A673 (cell line): ENCODE measurements at regions of chr2 and their contacts with region 1.

Region 1: DNA sequence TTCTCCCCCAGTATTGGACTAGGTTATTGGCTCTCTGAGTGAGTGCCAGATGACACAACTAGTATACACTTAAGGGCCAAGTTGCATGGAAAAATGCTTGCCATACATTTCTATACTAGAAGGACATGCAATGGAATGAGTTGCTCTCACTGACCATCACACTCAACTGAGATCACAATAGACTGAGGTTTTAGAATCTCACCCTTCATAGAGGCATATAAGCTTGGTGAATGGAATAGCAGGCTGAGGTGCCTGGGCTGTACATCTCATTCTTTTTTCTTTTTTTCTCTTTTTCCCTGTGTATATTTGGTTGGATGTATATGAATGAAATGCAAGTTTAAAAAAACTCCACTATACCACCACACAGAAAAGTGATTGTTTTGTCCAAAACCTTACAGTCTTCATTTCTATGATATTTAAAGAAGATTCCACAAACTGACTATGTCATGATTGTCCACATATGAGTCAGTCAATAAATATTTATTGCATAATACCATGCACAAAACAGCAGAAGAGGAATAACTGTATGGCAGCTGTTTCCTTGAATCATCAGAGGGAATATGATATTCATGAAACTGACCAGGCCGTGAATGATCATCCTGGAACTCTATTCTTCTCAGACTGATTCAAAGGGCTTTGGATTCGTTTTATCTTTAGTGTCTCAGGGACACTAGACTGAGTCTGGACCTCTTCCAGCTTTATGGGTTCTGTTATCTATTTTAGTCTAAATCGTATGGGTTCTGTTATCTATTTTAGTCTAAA is 122.6 kb upstream of the STK17B start:
- DNase-seq: no peak
- H3K4me3 ChIP-seq: no peak overlapping the region
- H3K27ac ChIP-seq: no peak overlapping the region
- H3K4me1 ChIP-seq: no peaks in the 10 kb centered on the region
- H3K27me3 ChIP-seq: no peaks in the 10 kb centered on the region
- CTCF ChIP-seq: no peak

Region 2: GRCh38 chr2:196453613-196454047 is 159.7 kb after region 1 on chr2:
- CTCF ChIA-PET with region 1: interaction called, 3 read pairs
- POLR2A ChIA-PET with region 1: no interaction called
- intact Hi-C with region 1: loop called (anchors 1 kb)
- DNase-seq: peak; percentile 57
- H3K4me3 ChIP-seq: no peak overlapping the region
- H3K27ac ChIP-seq: no peak overlapping the region
- H3K4me1 ChIP-seq: no peaks in the 10 kb centered on the region
- H3K27me3 ChIP-seq: no peaks in the 10 kb centered on the region
- CTCF ChIP-seq: peak; percentile 71

Region 3: GRCh38 chr2:196758474-196759377 is 464.8 kb after region 1 on chr2:
- CTCF ChIA-PET with region 1: no interaction called
- POLR2A ChIA-PET with region 1: no interaction called
- intact Hi-C with region 1: loop called (anchors 2 kb)
- DNase-seq: peak; percentile 17
- H3K4me3 ChIP-seq: no peak overlapping the region
- H3K27ac ChIP-seq: no peak overlapping the region
- H3K4me1 ChIP-seq: no peaks in the 10 kb centered on the region
- H3K27me3 ChIP-seq: no peaks in the 10 kb centered on the region
- CTCF ChIP-seq: peak; percentile 52